Dorsolateral prefrontal cortex (tissue), 120 donors: ENCODE measurements at regions of chr22 and their contacts with region 1.

Region 1: GRCh38 chr22:35627264-35628041 is 10.3 kb upstream of the MB start:
- DNase-seq: peak in 9 of 10 donors; percentile 23 to 72 (median 59)
- H3K4me3 ChIP-seq: peak overlapping the region; percentile 16 to 71 (median 53)
- H3K27ac ChIP-seq: peak overlapping the region in 14 of 59 donors; percentile 11 to 72 (median 48)
- H3K27me3 ChIP-seq: peaks cover 0 to 6% (median 0%) of the 10 kb centered on the region in 45 donors
- CTCF ChIP-seq: peak in 53 of 56 donors; percentile 20 to 67 (median 45)

Region 2: GRCh38 chr22:35568751-35569725 is 58.4 kb before region 1 on chr22:
- intact Hi-C with region 1: no loop called
- DNase-seq: no peak
- H3K4me3 ChIP-seq: no peak overlapping the region
- H3K27ac ChIP-seq: no peak overlapping the region
- H3K27me3 ChIP-seq: no peaks in the 10 kb centered on the region
- CTCF ChIP-seq: no peak

Region 3: GRCh38 chr22:35838855-35839576 is 211.6 kb after region 1 on chr22:
- intact Hi-C with region 1: loop called in 1 of 2 experiments (anchors 5 kb)
- DNase-seq: peak in 3 of 10 donors; percentile 38 to 71 (median 41)
- H3K4me3 ChIP-seq: peak overlapping the region in 54 of 59 donors; percentile 2 to 64 (median 46)
- H3K27ac ChIP-seq: peak overlapping the region in 52 of 59 donors; percentile 10 to 87 (median 54)
- H3K27me3 ChIP-seq: no peaks in the 10 kb centered on the region
- CTCF ChIP-seq: peak in 40 of 56 donors; percentile 12 to 53 (median 33)